A673 (cell line): ENCODE measurements at regions of chr4 and their contacts with region 1.

Region 1: GRCh38 chr4:68175562-68176155 is 46.0 kb upstream of the TMPRSS11F start:
- DNase-seq: peak; percentile 57
- H3K4me3 ChIP-seq: no peak overlapping the region
- H3K27ac ChIP-seq: no peak overlapping the region
- H3K4me1 ChIP-seq: no peaks in the 10 kb centered on the region
- H3K27me3 ChIP-seq: no peaks in the 10 kb centered on the region
- CTCF ChIP-seq: peak; percentile 57

Region 2: DNA sequence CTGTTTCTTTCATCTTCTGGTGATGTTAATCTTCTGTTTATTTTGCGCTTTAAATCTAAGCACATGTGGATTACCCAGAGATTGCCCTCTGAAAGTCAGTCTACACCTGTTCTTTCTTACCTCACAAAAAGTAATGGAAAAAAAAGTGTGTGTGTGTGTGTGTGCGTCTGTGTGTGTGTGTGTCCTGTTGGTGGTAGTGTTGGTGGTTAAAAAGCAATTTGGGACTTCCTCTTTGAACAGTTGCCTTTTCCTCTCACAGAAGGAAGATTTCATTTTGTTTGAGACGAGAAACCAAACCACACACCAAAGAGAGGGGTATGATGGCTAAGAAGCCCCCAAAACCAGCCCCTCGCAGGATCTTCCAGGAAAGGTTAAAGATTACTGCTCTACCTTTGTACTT is 617.2 kb before region 1 on chr4 and contains the start of gene STAP1:
- CTCF ChIA-PET with region 1: no interaction called
- POLR2A ChIA-PET with region 1: no interaction called
- intact Hi-C with region 1: loop called (anchors 10 kb)
- DNase-seq: no peak
- H3K4me3 ChIP-seq: no peak within 1 kb of the TSS
- H3K27ac ChIP-seq: no peak within 1 kb of the TSS
- H3K4me1 ChIP-seq: no peaks in the 10 kb centered on the region
- H3K27me3 ChIP-seq: no peaks in the 10 kb centered on the region
- CTCF ChIP-seq: no peak
- total RNA-seq, gene STAP1: not detected in 2 replicates

Region 3: GRCh38 chr4:67615119-67615518 is 560.5 kb before region 1 on chr4:
- CTCF ChIA-PET with region 1: no interaction called
- POLR2A ChIA-PET with region 1: no interaction called
- intact Hi-C with region 1: no loop called
- DNase-seq: no peak
- H3K4me3 ChIP-seq: no peak overlapping the region
- H3K27ac ChIP-seq: no peak overlapping the region
- H3K4me1 ChIP-seq: no peaks in the 10 kb centered on the region
- H3K27me3 ChIP-seq: no peaks in the 10 kb centered on the region
- CTCF ChIP-seq: no peak

Region 4: GRCh38 chr4:67746797-67747495 is 428.7 kb before region 1 on chr4:
- CTCF ChIA-PET with region 1: no interaction called
- POLR2A ChIA-PET with region 1: no interaction called
- intact Hi-C with region 1: loop called (anchors 10 kb)
- DNase-seq: peak; percentile 31
- H3K4me3 ChIP-seq: no peak overlapping the region
- H3K27ac ChIP-seq: no peak overlapping the region
- H3K4me1 ChIP-seq: no peaks in the 10 kb centered on the region
- H3K27me3 ChIP-seq: no peaks in the 10 kb centered on the region
- CTCF ChIP-seq: peak; percentile 58

Region 5: GRCh38 chr4:67871867-67872266 is 303.8 kb before region 1 on chr4:
- CTCF ChIA-PET with region 1: no interaction called
- POLR2A ChIA-PET with region 1: no interaction called
- intact Hi-C with region 1: loop called (anchors 5 kb)
- DNase-seq: peak; percentile 20
- H3K4me3 ChIP-seq: no peak overlapping the region
- H3K27ac ChIP-seq: no peak overlapping the region
- H3K4me1 ChIP-seq: no peaks in the 10 kb centered on the region
- H3K27me3 ChIP-seq: no peaks in the 10 kb centered on the region
- CTCF ChIP-seq: peak; percentile 44

Region 6: GRCh38 chr4:67988991-67989390 is 186.7 kb before region 1 on chr4:
- CTCF ChIA-PET with region 1: no interaction called
- POLR2A ChIA-PET with region 1: no interaction called
- intact Hi-C with region 1: loop called (anchors 1 kb)
- DNase-seq: no peak
- H3K4me3 ChIP-seq: no peak overlapping the region
- H3K27ac ChIP-seq: no peak overlapping the region
- H3K4me1 ChIP-seq: no peaks in the 10 kb centered on the region
- H3K27me3 ChIP-seq: no peaks in the 10 kb centered on the region
- CTCF ChIP-seq: no peak

Region 7: DNA sequence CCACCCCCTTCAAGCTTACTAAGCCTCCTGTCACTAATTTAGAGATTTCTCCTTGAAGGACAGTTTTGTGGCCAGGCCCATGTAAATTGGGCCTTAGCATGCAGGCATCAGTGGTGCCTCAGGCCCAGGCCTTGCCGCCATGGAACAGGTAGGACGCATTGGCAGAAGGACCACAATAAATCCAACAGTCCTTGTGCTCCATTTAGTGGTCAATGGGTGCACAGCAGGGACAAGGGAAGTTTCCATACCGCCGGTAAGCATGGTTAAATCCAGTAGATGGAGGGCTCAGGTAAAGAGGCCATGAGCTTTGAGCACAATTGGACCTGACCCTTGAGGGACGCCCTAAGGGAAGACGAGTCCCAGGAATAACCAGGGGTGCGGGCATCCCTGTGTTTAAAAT is 1201.9 kb after region 1 on chr4:
- CTCF ChIA-PET with region 1: no interaction called
- POLR2A ChIA-PET with region 1: no interaction called
- intact Hi-C with region 1: no loop called
- DNase-seq: no peak
- H3K4me3 ChIP-seq: no peak overlapping the region
- H3K27ac ChIP-seq: no peak overlapping the region
- H3K4me1 ChIP-seq: no peaks in the 10 kb centered on the region
- H3K27me3 ChIP-seq: no peaks in the 10 kb centered on the region
- CTCF ChIP-seq: no peak